Activated B cell treated with CpG ODN at 0.5 μM for 24 hours (primary cell): ENCODE measurements at regions of chr9 and their contacts with region 1.

Region 1: GRCh38 chr9:37329576-37329975 is 92.9 kb upstream of the GRHPR start:
- DNase-seq: no peak
- ATAC-seq: peak; percentile 47
- H3K4me3 Mint-ChIP-seq: peak overlapping the region; percentile 33
- H3K27ac Mint-ChIP-seq: peak overlapping the region; percentile 83
- H3K4me1 Mint-ChIP-seq: peaks cover 71% of the 10 kb centered on the region
- H3K27me3 Mint-ChIP-seq: no peaks in the 10 kb centered on the region
- CTCF ChIP-seq: no peak

Region 2: DNA sequence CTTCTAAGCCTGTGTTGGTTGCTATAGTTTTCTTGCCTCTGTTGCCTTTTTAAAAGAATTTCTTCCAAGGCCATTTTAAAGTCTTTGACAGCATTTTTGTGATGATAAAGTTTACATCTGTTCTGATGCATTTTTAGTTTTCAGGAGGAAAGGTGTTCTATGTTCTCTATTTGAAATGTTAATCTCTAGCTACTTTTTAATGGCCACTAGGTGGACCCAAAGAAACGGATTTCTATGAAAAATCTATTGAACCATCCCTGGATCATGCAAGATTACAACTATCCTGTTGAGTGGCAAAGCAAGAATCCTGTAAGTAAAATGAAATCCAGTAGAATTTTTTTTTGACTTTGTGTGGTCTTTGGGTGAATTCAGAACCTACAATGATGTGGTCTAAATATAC is 696.7 kb before region 1 on chr9:
- CTCF ChIA-PET with region 1: interaction called, 4 read pairs
- POLR2A ChIA-PET with region 1: no interaction called
- intact Hi-C with region 1: loop called (anchors 1 kb)
- DNase-seq: no peak
- ATAC-seq: no peak
- H3K4me3 Mint-ChIP-seq: no peak overlapping the region
- H3K27ac Mint-ChIP-seq: no peak overlapping the region
- H3K4me1 Mint-ChIP-seq: no peaks in the 10 kb centered on the region
- H3K27me3 Mint-ChIP-seq: no peaks in the 10 kb centered on the region
- CTCF ChIP-seq: peak; percentile 24

Region 3: GRCh38 chr9:36873247-36873875 is 456.2 kb before region 1 on chr9:
- CTCF ChIA-PET with region 1: interaction called, 25 read pairs
- POLR2A ChIA-PET with region 1: interaction called, 6 read pairs
- intact Hi-C with region 1: loop called (anchors 1 kb)
- DNase-seq: peak; percentile 52
- ATAC-seq: peak; percentile 77
- H3K4me3 Mint-ChIP-seq: no peak overlapping the region
- H3K27ac Mint-ChIP-seq: peak overlapping the region; percentile 87
- H3K4me1 Mint-ChIP-seq: peaks cover 63% of the 10 kb centered on the region
- H3K27me3 Mint-ChIP-seq: no peaks in the 10 kb centered on the region
- CTCF ChIP-seq: no peak

Region 4: GRCh38 chr9:36987891-36988290 is 341.7 kb before region 1 on chr9:
- CTCF ChIA-PET with region 1: interaction called, 4 read pairs
- POLR2A ChIA-PET with region 1: interaction called, 13 read pairs
- intact Hi-C with region 1: no loop called
- DNase-seq: no peak
- ATAC-seq: no peak
- H3K4me3 Mint-ChIP-seq: peak overlapping the region; percentile 71
- H3K27ac Mint-ChIP-seq: peak overlapping the region; percentile 82
- H3K4me1 Mint-ChIP-seq: peaks cover 90% of the 10 kb centered on the region
- H3K27me3 Mint-ChIP-seq: no peaks in the 10 kb centered on the region
- CTCF ChIP-seq: no peak

Region 5: DNA sequence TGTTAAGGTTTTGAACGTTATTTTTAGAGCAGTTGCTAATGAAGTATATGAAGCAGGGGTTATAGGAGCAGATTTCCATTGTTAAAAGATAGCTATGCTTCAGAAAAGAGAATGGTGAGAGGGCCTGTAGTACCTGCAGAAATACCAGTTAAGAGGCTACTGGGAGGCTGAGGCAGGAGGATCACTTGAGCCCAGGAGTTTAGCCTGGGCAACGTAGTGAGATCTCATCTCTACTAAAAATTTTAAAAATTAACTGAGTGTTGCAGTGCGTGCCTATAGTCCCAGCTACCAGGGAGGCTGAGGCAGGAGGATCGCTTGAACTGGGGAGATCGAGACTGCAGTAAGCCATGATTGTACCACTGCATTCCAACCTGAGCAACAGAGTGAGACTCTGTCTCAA is 60.4 kb before region 1 on chr9:
- CTCF ChIA-PET with region 1: no interaction called
- POLR2A ChIA-PET with region 1: no interaction called
- intact Hi-C with region 1: no loop called
- DNase-seq: no peak
- ATAC-seq: no peak
- H3K4me3 Mint-ChIP-seq: no peak overlapping the region
- H3K27ac Mint-ChIP-seq: peak overlapping the region; percentile 47
- H3K4me1 Mint-ChIP-seq: peaks cover 58% of the 10 kb centered on the region
- H3K27me3 Mint-ChIP-seq: no peaks in the 10 kb centered on the region
- CTCF ChIP-seq: no peak

Region 6: GRCh38 chr9:37398464-37399025 is 69.0 kb after region 1 on chr9:
- CTCF ChIA-PET with region 1: interaction called, 3 read pairs
- POLR2A ChIA-PET with region 1: interaction called, 22 read pairs
- intact Hi-C with region 1: no loop called
- DNase-seq: no peak
- ATAC-seq: no peak
- H3K4me3 Mint-ChIP-seq: peak overlapping the region; percentile 66
- H3K27ac Mint-ChIP-seq: peak overlapping the region; percentile 92
- H3K4me1 Mint-ChIP-seq: peaks cover 73% of the 10 kb centered on the region
- H3K27me3 Mint-ChIP-seq: no peaks in the 10 kb centered on the region
- CTCF ChIP-seq: no peak

Region 7: DNA sequence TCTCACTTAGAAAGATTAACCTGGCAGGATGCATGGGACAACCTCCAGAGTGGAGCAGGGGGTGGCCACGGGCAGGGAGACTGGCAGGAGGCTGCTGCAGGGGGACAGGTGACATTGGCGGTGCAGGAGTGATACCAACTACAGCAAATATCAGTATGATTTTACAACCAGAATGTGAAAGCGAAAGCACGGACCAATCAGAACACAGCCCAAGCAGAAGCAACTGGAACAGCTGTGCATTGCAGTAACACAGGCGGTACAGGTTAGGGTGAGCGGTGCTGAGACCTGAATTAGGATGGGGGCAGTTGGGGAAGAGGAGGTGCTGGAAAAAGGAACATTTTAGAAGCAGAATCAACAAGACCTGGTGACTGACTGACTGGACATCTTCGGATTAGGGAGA is 185.4 kb after region 1 on chr9:
- CTCF ChIA-PET with region 1: no interaction called
- POLR2A ChIA-PET with region 1: no interaction called
- intact Hi-C with region 1: no loop called
- DNase-seq: no peak
- ATAC-seq: no peak
- H3K4me3 Mint-ChIP-seq: no peak overlapping the region
- H3K27ac Mint-ChIP-seq: no peak overlapping the region
- H3K4me1 Mint-ChIP-seq: peaks cover 8% of the 10 kb centered on the region
- H3K27me3 Mint-ChIP-seq: no peaks in the 10 kb centered on the region
- CTCF ChIP-seq: no peak